ENCODE measurements at regions of chr2 and their contacts with region 1.

Region 1: GRCh38 chr2:42859006-42859552 is 66.7 kb upstream of the HAAO start:
- DNase-seq: no peak

Region 2: DNA sequence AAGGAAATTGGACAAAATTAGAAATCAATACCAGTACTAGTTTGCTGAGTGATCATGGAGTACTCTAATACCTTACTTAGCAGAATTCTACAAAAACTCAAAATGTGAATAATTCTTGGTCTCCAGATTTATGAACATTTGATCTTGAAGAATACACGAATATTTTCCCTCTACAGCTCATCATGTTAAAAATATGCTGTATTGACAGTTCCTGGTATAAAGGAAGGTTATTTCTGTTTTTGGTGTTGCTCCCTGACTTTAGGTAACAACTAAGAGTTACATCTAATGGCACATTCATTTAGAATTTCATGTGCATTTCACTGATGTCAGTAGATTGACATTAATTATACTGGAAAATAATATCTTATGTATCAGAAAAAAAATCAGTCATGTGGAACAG is 1290.4 kb before region 1 on chr2:
- intact Hi-C with region 1: loop called in 1 of 2 experiments (anchors 5 kb)
- DNase-seq: no peak

Region 3: GRCh38 chr2:42827647-42828486 is 31.2 kb before region 1 on chr2:
- intact Hi-C with region 1: no loop called
- DNase-seq: peak; percentile 98

Region 4: GRCh38 chr2:42878581-42878980 is 19.5 kb after region 1 on chr2:
- intact Hi-C with region 1: no loop called
- DNase-seq: no peak

Region 5: DNA sequence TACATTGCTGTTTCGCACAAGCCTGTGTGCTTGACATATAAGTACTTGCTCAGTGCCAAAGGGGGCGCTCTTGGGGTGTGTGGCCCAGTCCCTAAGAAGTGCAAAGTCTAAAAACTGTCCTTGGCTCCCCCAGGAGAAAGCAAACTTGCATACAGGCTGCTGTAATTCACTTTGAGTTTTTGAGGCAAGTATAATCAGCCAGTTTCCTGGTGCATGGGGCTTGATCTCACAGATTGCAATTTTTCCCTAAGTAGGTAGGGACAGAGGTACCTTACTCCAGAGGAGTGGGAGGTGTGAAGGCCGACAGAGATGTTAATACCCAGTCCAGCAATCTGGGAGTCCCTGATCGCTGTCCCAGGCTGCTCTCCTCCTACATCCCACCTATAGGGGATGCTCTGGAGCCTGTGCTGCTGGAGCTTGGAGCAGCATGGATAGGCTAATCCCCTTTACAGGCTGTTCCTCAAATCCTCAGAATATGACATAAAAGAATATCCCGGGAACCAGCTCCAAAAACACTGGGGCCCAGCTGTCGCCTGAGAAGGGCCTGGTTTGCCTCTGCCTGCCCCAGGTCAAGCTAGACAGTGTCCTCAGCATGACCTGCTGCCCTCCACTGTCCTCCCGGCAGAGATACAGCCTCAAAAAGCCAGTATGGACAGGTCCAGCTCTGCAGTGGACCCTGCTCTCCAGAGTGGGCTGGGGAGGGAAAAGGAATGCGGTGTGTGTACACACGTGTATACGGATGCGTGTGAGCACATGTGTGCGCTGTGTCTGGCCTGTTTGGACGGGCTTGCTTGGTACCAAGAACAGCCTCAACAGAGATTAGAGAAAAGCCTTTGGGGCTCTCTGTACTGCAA is 69.8 kb after region 1 on chr2:
- intact Hi-C with region 1: loop called in 1 of 2 experiments (anchors 5 kb)
- DNase-seq: no peak